Heart right ventricle (tissue), 16 donors: ENCODE measurements at regions of chr12 and their contacts with region 1.

Region 1: GRCh38 chr12:15882118-15882971 is at the start of gene STRAP:
- DNase-seq: peak; percentile 96
- ATAC-seq: peak; percentile 97 to 98 (median 98)
- H3K4me3 ChIP-seq: peak within 1 kb of the TSS; percentile 47 to 91 (median 77)
- H3K27ac ChIP-seq: peak within 1 kb of the TSS; percentile 67 to 98 (median 94)
- H3K4me1 ChIP-seq: peaks cover 6 to 52% (median 44%) of the 10 kb centered on the region in 9 donors
- H3K27me3 ChIP-seq: no peaks in the 10 kb centered on the region
- CTCF ChIP-seq: no peak
- total RNA-seq, gene STRAP: 108 to 161 (median 116) TPM

Region 2: DNA sequence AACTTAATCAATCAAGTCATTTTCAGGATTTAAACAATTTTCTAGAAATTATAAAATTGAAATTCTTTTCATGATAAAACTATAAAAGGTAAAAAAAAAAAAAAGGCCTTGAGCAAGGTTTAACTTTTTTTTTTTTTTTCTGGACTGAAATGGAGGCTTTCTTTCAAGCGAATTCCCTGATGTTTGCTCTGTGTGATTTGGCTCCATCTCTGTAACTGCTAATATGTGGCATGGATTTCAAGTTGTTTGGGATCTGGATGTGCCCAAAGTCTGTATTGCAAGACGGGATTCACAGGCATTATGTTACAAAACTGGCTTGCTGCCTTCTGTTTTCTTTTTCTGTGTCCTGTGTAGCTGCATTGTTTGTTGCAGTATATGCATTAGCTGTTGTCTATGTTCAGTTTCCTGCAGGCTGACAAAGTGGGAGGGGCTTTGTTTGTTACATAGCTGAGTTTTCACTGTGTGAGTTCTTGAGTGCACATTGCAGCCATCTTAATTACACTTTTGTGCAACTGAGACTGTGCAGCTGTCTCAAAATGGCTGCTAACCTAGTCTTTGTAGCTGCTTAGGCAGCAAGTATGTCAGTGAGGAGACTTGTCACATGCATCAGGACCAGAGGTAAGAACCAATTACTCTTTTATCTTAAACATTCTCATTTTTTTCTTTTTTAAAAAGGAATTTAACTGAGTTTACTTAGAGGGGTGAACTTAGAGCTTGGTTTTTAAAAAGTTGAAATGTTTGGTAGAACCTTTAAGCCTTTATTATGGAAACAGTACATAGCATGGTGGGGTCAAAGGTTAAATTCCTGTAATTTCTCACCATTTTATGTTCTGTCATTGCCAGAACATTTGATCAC is 1497.3 kb before region 1 on chr12:
- intact Hi-C with region 1: loop called in 1 of 10 experiments (anchors 10 kb)
- DNase-seq: peak in 1 of 2 donors; percentile 79
- ATAC-seq: peak; percentile 91 to 97 (median 96)
- H3K4me3 ChIP-seq: peak overlapping the region; percentile 22 to 47 (median 40)
- H3K27ac ChIP-seq: peak overlapping the region; percentile 21 to 87 (median 78)
- H3K4me1 ChIP-seq: peaks cover 0 to 63% (median 35%) of the 10 kb centered on the region in 9 donors
- H3K27me3 ChIP-seq: no peaks in the 10 kb centered on the region
- CTCF ChIP-seq: no peak

Region 3: GRCh38 chr12:15778126-15778525 is 104.2 kb before region 1 on chr12:
- intact Hi-C with region 1: no loop called
- DNase-seq: no peak
- ATAC-seq: no peak
- H3K4me3 ChIP-seq: no peak overlapping the region
- H3K27ac ChIP-seq: no peak overlapping the region
- H3K4me1 ChIP-seq: peaks cover 0 to 35% (median 12%) of the 10 kb centered on the region in 9 donors
- H3K27me3 ChIP-seq: no peaks in the 10 kb centered on the region
- CTCF ChIP-seq: no peak